Calu3 (cell line): ENCODE measurements at regions of chr12 and their contacts with region 1.

Region 1: GRCh38 chr12:125402874-125403789 is 337.9 kb downstream of the AACS start:
- DNase-seq: peak; percentile 36
- H3K4me3 Mint-ChIP-seq: no peak overlapping the region
- H3K27ac Mint-ChIP-seq: no peak overlapping the region
- H3K4me1 Mint-ChIP-seq: no peaks in the 10 kb centered on the region
- H3K27me3 Mint-ChIP-seq: peaks cover 80% of the 10 kb centered on the region
- CTCF ChIP-seq: peak; percentile 65

Region 2: GRCh38 chr12:124906606-124907261 is 496.4 kb before region 1 on chr12:
- CTCF ChIA-PET with region 1: interaction called, 5 read pairs
- intact Hi-C with region 1: loop called (anchors 10 kb)
- DNase-seq: peak; percentile 95
- H3K4me3 Mint-ChIP-seq: no peak overlapping the region
- H3K27ac Mint-ChIP-seq: peak overlapping the region; percentile 55
- H3K4me1 Mint-ChIP-seq: peaks cover 48% of the 10 kb centered on the region
- H3K27me3 Mint-ChIP-seq: no peaks in the 10 kb centered on the region
- CTCF ChIP-seq: peak; percentile 95

Region 3: GRCh38 chr12:125092872-125093680 is 310.1 kb before region 1 on chr12:
- CTCF ChIA-PET with region 1: no interaction called
- intact Hi-C with region 1: loop called (anchors 1 kb)
- DNase-seq: peak; percentile 83
- H3K4me3 Mint-ChIP-seq: peak overlapping the region; percentile 36
- H3K27ac Mint-ChIP-seq: peak overlapping the region; percentile 34
- H3K4me1 Mint-ChIP-seq: peaks cover 41% of the 10 kb centered on the region
- H3K27me3 Mint-ChIP-seq: no peaks in the 10 kb centered on the region
- CTCF ChIP-seq: peak; percentile 42

Region 4: GRCh38 chr12:125140279-125141209 is 262.6 kb before region 1 on chr12:
- CTCF ChIA-PET with region 1: no interaction called
- intact Hi-C with region 1: no loop called
- DNase-seq: peak; percentile 54
- H3K4me3 Mint-ChIP-seq: no peak overlapping the region
- H3K27ac Mint-ChIP-seq: peak overlapping the region; percentile 26
- H3K4me1 Mint-ChIP-seq: peaks cover 9% of the 10 kb centered on the region
- H3K27me3 Mint-ChIP-seq: no peaks in the 10 kb centered on the region
- CTCF ChIP-seq: no peak

Region 5: DNA sequence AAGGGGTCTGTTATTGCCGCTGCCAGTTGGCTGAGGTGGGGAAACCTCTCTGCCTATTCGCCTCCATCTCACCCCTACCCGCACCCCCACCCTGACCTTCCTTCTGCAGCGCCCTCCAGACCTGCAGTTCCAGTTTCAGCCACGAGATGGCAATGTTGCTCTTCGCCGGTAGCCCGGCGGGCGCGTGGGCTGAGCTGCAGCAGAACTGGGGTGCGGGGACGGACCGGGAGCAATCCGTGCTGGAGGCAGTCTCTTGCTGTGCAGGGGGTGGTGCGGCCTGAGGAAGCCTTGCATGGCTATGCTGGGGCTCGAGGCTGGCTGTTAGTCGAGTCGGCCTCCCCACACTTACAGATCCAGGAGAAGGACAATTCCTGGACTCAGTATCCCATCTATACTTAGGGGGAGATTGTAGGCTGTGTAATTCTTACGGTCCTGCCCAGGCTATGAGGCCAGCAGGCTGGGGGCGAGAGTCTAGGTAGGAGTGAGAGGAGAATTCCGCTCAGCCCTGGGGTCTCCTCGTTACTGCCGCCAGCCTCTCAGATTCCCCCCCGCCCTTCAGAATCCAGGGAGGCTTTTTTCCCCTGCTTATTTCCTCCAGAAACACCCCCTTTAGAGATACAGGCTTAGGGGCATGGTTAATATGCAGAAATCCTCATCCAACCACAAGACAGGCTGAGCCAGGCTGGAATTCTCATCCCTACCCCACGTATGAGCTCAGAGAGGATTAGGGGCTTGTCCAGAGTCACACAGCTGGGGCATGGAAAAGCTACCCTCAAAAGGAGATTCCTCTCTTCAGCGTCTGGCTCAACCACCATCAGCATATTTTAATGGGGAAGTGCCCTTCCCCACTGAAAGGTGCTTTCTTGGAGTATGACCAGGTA is 219.7 kb before region 1 on chr12:
- CTCF ChIA-PET with region 1: interaction called, 21 read pairs
- intact Hi-C with region 1: loop called (anchors 1 kb)
- DNase-seq: peak; percentile 92
- H3K4me3 Mint-ChIP-seq: peak overlapping the region; percentile 25
- H3K27ac Mint-ChIP-seq: no peak overlapping the region
- H3K4me1 Mint-ChIP-seq: peaks cover 18% of the 10 kb centered on the region
- H3K27me3 Mint-ChIP-seq: peaks cover 55% of the 10 kb centered on the region
- CTCF ChIP-seq: peak; percentile 99

Region 6: GRCh38 chr12:125240717-125241116 is 162.4 kb before region 1 on chr12:
- CTCF ChIA-PET with region 1: interaction called, 5 read pairs
- intact Hi-C with region 1: loop called (anchors 1 kb)
- DNase-seq: no peak
- H3K4me3 Mint-ChIP-seq: no peak overlapping the region
- H3K27ac Mint-ChIP-seq: no peak overlapping the region
- H3K4me1 Mint-ChIP-seq: no peaks in the 10 kb centered on the region
- H3K27me3 Mint-ChIP-seq: peaks cover 63% of the 10 kb centered on the region
- CTCF ChIP-seq: no peak

Region 7: GRCh38 chr12:125330645-125331341 is 72.3 kb before region 1 on chr12:
- CTCF ChIA-PET with region 1: interaction called, 4 read pairs
- intact Hi-C with region 1: loop called (anchors 1 kb)
- DNase-seq: peak; percentile 92
- H3K4me3 Mint-ChIP-seq: peak overlapping the region; percentile 45
- H3K27ac Mint-ChIP-seq: no peak overlapping the region
- H3K4me1 Mint-ChIP-seq: no peaks in the 10 kb centered on the region
- H3K27me3 Mint-ChIP-seq: peaks cover 86% of the 10 kb centered on the region
- CTCF ChIP-seq: peak; percentile 95